ENCODE measurements at regions of chr6 and their contacts with region 1.

Region 1: GRCh38 chr6:133099573-133099972 is 141.6 kb upstream of the EYA4 start:
- DNase-seq: peak; percentile 91
- ATAC-seq: peak; percentile 89
- H3K4me3 ChIP-seq: peak overlapping the region; percentile 27; the same call in 1 of the 2 replicates
- H3K27ac ChIP-seq: peak overlapping the region; percentile 93
- H3K4me1 ChIP-seq: peaks cover 37% of the 10 kb centered on the region
- H3K27me3 ChIP-seq: no peaks in the 10 kb centered on the region
- CTCF ChIP-seq: no peak

Region 2: GRCh38 chr6:132969196-132969595 is 130.4 kb before region 1 on chr6:
- CTCF ChIA-PET with region 1: no interaction called
- POLR2A ChIA-PET with region 1: no interaction called
- intact Hi-C with region 1: loop called (anchors 2 kb)
- DNase-seq: peak; percentile 12
- ATAC-seq: 0 out of 2 replicates have a peak, but pooled peaks have one; percentile 5
- H3K4me3 ChIP-seq: no peak overlapping the region
- H3K27ac ChIP-seq: peak overlapping the region; percentile 5; the same call in 1 of the 2 replicates
- H3K4me1 ChIP-seq: peaks cover 49% of the 10 kb centered on the region
- H3K27me3 ChIP-seq: no peaks in the 10 kb centered on the region
- CTCF ChIP-seq: no peak

Region 3: DNA sequence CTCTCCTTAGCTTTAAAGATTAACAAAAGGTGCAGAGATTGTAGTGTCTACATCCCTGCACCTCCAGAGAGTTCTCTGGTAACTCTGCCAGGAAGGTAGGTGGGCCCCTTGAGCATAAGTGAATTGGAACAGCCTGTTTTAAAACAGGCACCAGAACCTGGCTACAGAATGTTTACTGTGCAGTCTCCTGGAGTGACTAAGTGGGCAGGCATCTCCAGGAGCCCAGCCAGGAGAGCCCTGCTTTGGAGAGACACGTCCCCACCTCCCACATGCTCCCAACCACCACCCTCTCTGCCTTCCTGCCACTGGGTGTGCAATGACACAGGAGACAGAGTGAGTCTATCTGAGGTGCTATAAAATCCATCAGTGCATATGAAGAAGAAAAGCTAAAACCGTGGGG is 31.3 kb after region 1 on chr6:
- CTCF ChIA-PET with region 1: no interaction called
- POLR2A ChIA-PET with region 1: no interaction called
- intact Hi-C with region 1: loop called (anchors 2 kb)
- DNase-seq: peak; percentile 95
- ATAC-seq: peak; percentile 98
- H3K4me3 ChIP-seq: no peak overlapping the region
- H3K27ac ChIP-seq: peak overlapping the region; percentile 69
- H3K4me1 ChIP-seq: peaks cover 27% of the 10 kb centered on the region
- H3K27me3 ChIP-seq: no peaks in the 10 kb centered on the region
- CTCF ChIP-seq: peak; percentile 41; the same call in 1 of the 2 replicates

Region 4: GRCh38 chr6:133159255-133159795 is 59.8 kb after region 1 on chr6:
- CTCF ChIA-PET with region 1: no interaction called
- POLR2A ChIA-PET with region 1: interaction called, 12 read pairs
- intact Hi-C with region 1: no loop called
- DNase-seq: peak; percentile 43
- ATAC-seq: peak; percentile 54
- H3K4me3 ChIP-seq: no peak overlapping the region
- H3K27ac ChIP-seq: no peak overlapping the region
- H3K4me1 ChIP-seq: no peaks in the 10 kb centered on the region; the same call in 1 of the 2 replicates
- H3K27me3 ChIP-seq: no peaks in the 10 kb centered on the region
- CTCF ChIP-seq: no peak

Region 5: DNA sequence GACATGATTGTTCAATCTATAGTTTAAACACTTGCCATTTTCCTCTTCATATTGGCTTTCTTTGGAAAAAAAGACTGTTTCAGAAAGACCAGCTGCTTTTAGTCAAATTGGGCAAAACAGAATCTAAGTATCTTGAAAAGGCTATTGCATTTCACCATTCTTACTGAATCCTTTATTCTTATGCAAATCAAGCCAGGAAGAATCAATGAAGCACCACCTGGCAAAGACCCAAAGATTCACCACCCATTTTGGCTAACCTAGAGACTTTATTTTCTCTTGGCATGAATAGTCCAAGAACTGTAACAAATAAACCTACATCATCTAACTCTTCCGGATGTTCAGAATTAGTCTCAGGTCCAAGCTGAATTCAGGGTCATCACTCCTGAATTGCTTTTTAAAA is 70.3 kb after region 1 on chr6:
- CTCF ChIA-PET with region 1: no interaction called
- POLR2A ChIA-PET with region 1: no interaction called
- intact Hi-C with region 1: loop called (anchors 2 kb)
- DNase-seq: no peak
- ATAC-seq: no peak
- H3K4me3 ChIP-seq: no peak overlapping the region
- H3K27ac ChIP-seq: no peak overlapping the region
- H3K4me1 ChIP-seq: peaks cover 15% of the 10 kb centered on the region
- H3K27me3 ChIP-seq: no peaks in the 10 kb centered on the region
- CTCF ChIP-seq: no peak

Region 6: DNA sequence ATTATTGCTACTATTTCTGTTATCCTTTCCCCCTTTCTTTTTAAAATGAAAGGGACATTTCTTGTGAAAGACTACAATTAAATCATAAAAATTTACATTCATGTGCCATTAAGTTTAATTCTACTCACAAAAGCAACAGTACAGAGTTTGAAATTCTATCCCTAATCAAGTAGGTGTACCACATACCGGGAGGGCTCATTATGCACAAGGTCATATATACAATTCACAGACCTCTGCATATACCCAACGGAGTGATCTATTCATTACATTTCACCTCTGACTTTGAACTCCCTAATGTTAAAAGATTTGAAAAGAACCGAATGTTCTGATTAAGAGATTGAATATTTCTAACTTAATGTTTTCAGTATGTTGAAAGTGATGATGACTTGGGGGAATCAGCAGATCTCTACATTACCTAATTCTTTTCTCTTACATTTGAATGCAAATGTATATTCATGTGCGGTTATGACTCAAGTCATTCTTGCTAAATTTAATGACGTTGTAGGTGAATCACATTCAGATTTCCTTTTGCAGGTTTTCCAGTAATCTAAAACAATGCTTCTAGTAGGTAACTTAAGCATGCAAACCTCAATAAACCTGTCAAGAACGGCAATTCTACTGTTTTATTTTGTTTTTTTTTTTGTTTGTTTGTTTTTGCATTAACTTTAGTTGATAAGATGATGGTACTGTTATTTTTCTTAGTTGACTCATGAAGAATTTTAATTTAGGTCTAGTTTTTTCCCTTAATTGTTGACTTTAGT is 148.8 kb after region 1 on chr6:
- CTCF ChIA-PET with region 1: no interaction called
- POLR2A ChIA-PET with region 1: no interaction called
- intact Hi-C with region 1: loop called (anchors 1 kb)
- DNase-seq: peak; percentile 88
- ATAC-seq: peak; percentile 57
- H3K4me3 ChIP-seq: 0 out of 2 replicates have a peak overlapping the region, but pooled peaks have one; percentile 25
- H3K27ac ChIP-seq: peak overlapping the region; percentile 96
- H3K4me1 ChIP-seq: peaks cover 58% of the 10 kb centered on the region
- H3K27me3 ChIP-seq: no peaks in the 10 kb centered on the region
- CTCF ChIP-seq: no peak

Measured in PC-3 (cell line).